Common myeloid progenitor, CD34-positive (primary cell): ENCODE measurements at regions of chr1 and their contacts with region 1.

Region 1: GRCh38 chr1:93093332-93094006 is 14.4 kb downstream of the MTF2 start:
- DNase-seq: no peak
- H3K4me3 ChIP-seq: no peak overlapping the region
- H3K27ac ChIP-seq: peak overlapping the region in 1 of 2 experiments; percentile 52
- H3K4me1 ChIP-seq: peaks cover 0 to 10% (median 6%) of the 10 kb centered on the region in 4 experiments
- H3K27me3 ChIP-seq: no peaks in the 10 kb centered on the region

Region 2: DNA sequence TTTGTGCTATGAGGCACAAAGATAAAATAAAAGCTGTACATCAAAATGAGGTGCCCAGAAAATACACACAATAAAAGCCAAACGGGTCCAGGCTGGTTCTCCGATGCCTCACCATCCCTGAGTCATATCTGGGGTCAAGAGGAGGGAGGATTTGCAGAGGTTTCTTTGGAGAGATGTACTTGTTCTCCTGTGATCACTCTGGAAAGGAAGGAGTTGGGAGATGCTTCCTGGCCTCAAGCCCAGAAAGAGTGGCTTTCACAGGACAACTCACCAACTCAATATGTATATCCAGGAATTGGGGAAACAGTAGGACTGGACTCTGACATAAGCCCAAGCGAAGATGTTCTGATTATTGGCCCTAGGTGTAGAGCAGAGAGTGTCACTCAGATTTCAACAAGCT is 184.1 kb before region 1 on chr1:
- CTCF ChIA-PET with region 1: no interaction called
- POLR2A ChIA-PET with region 1: no interaction called
- DNase-seq: no peak
- H3K4me3 ChIP-seq: no peak overlapping the region
- H3K27ac ChIP-seq: no peak overlapping the region
- H3K4me1 ChIP-seq: no peaks in the 10 kb centered on the region
- H3K27me3 ChIP-seq: peaks cover 0 to 3% (median 0%) of the 10 kb centered on the region in 5 experiments

Region 3: DNA sequence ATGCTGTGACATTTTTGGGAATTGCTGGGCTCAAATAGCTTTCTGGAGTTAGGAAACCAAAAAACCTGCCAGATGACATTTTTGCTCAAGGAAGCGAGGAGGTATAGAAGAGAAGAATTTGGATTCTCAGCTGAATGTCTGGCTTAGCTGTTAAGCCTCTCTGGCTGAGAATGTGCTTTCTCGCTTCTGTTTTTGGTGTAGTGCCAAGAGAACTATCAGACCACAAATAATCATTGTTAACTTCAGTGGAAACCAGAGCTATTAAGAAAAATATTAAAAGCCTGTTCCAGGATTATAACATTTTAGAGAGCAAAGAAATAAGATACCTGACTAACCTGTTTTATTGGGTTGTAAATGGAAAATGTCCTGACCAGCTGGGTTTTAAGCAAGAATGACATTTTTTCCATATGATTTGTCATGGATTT is 92.7 kb before region 1 on chr1:
- CTCF ChIA-PET with region 1: no interaction called
- POLR2A ChIA-PET with region 1: no interaction called
- DNase-seq: no peak
- H3K4me3 ChIP-seq: no peak overlapping the region
- H3K27ac ChIP-seq: no peak overlapping the region
- H3K4me1 ChIP-seq: no peaks in the 10 kb centered on the region
- H3K27me3 ChIP-seq: peaks cover 0 to 3% (median 0%) of the 10 kb centered on the region in 5 experiments

Region 4: DNA sequence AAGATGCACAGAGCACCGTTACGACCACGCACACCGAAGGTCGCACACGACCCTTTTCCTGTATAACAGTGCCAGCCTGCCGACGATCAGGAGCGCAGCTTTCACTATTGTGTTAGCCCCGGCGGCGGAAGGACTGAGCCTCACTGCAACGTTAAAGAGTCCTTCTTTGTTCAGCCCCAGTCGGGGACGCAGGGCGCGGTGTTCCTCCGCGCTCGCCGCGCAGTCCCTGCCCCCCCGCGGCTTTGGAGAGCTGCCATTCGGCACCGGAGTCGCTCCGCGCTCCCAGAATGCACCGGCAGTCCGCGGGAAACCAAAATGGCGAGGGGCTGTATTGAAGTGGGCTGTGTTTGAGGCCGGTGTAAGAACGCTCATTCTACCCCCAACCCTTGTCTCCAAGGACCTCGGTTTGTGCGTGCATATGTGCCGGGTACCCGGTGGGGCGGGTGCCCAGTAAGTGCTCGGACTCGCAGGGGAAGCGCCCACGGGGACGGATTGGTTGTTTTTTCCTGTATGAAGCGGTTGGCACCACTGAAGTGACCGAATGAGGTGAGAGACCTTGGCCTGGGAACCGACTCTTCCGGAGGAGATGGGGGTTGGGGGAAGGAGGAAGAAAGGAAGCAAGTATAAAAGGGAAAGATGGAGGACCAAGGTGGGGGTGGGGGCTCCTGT is 14.3 kb before region 1 on chr1 and contains the start of gene MTF2:
- CTCF ChIA-PET with region 1: interaction called, 14 read pairs
- POLR2A ChIA-PET with region 1: no interaction called
- DNase-seq: peak; percentile 98 to 99 (median 99)
- H3K4me3 ChIP-seq: peak within 1 kb of the TSS; percentile 81 to 100 (median 94)
- H3K27ac ChIP-seq: peak within 1 kb of the TSS; percentile 97 to 98
- H3K4me1 ChIP-seq: peaks cover 7 to 41% (median 21%) of the 10 kb centered on the region in 4 experiments
- H3K27me3 ChIP-seq: no peaks in the 10 kb centered on the region

Region 5: GRCh38 chr1:93148001-93148400 is 54.5 kb after region 1 on chr1:
- CTCF ChIA-PET with region 1: no interaction called
- POLR2A ChIA-PET with region 1: no interaction called
- DNase-seq: no peak
- H3K4me3 ChIP-seq: no peak overlapping the region
- H3K27ac ChIP-seq: no peak overlapping the region
- H3K4me1 ChIP-seq: no peaks in the 10 kb centered on the region
- H3K27me3 ChIP-seq: no peaks in the 10 kb centered on the region